ENCODE measurements at regions of chr10 and their contacts with region 1.

Region 1: DNA sequence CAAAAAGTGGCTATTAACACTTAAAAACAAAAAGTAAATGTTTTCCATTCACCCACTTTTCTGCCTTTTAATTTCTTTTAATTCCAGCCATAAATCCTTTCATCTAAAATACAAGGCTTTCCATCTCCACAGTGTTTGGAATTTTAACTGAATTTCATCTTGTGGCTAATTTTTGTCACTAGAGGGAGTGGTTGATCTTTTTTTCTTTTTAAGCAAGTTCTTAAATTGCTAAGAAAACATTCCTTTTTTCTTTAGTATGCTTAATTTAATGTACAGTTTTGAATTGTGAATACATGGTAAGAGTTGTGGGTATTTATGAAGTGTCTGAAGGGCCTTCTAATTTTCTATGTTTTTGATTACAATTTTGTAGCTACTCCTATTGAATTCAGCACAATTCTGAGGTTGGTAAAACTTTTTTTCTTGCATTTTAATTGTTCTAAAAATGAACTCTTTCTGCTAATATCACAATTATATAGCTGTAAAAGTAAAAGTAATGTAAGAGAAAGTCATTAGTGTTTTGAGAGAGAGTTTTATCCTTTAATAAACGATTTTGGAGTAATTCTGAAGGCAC is 54.9 kb upstream of the ANK3 start:
- DNase-seq: no peak
- ATAC-seq: no peak
- H3K4me3 ChIP-seq: no peak overlapping the region
- H3K4me3 Mint-ChIP-seq: no peak overlapping the region
- H3K27ac ChIP-seq: no peak overlapping the region
- H3K27ac Mint-ChIP-seq: no peak overlapping the region
- H3K4me1 ChIP-seq: no peaks in the 10 kb centered on the region
- H3K4me1 Mint-ChIP-seq: peaks cover 8% of the 10 kb centered on the region
- H3K27me3 ChIP-seq: no peaks in the 10 kb centered on the region
- H3K27me3 Mint-ChIP-seq: no peaks in the 10 kb centered on the region
- CTCF ChIP-seq: no peak

Region 2: DNA sequence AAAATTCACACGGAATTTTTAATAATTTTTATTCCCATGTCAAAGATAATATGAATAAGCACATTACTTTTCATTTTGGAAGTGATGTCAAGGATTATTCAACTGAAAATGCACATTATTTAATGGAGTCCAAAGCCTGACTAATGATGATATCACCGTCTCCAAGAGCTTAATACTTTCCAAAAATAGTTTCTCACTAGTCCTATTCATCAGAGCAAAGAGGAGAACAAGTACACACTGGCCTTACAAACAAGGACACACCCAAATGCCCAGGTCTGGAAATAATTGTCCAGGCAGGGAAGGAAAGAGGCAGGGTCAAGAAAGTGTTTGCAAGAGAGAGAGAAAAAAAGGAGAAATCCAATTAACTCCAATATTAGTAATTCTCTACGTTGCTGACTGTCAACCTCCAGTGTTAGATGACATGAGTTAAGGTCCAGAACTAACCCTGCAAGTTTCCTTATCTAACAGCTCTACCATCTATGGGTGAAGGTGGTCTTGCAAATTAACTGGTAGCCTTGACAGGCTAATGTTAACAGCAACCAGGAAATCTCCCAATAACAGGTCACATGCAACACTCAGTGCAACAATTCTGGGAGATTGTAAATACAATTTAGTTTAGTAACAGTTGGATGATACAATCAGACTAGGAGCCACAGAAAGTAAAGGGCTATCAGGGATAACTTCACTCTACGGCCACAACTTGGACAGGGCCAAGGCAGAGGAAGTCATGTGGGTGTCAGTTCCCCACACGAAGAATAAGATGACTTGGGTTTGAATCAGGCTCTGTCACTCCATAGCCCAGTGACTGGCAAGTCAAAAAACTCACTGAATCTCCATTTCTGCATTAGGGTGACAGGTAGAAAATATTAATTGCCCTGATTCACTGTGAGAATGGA is 321.2 kb before region 1 on chr10:
- CTCF ChIA-PET with region 1: no interaction called
- POLR2A ChIA-PET with region 1: no interaction called
- intact Hi-C with region 1: no loop called
- DNase-seq: no peak
- ATAC-seq: no peak
- H3K4me3 ChIP-seq: no peak overlapping the region
- H3K4me3 Mint-ChIP-seq: no peak overlapping the region
- H3K27ac ChIP-seq: no peak overlapping the region
- H3K27ac Mint-ChIP-seq: no peak overlapping the region
- H3K4me1 ChIP-seq: no peaks in the 10 kb centered on the region
- H3K4me1 Mint-ChIP-seq: no peaks in the 10 kb centered on the region
- H3K27me3 ChIP-seq: no peaks in the 10 kb centered on the region
- H3K27me3 Mint-ChIP-seq: no peaks in the 10 kb centered on the region
- CTCF ChIP-seq: no peak

Region 3: GRCh38 chr10:60495338-60496055 is 50.9 kb after region 1 on chr10:
- CTCF ChIA-PET with region 1: no interaction called
- POLR2A ChIA-PET with region 1: no interaction called
- intact Hi-C with region 1: no loop called
- DNase-seq: no peak
- ATAC-seq: no peak
- H3K4me3 ChIP-seq: no peak overlapping the region
- H3K4me3 Mint-ChIP-seq: no peak overlapping the region
- H3K27ac ChIP-seq: no peak overlapping the region
- H3K27ac Mint-ChIP-seq: no peak overlapping the region
- H3K4me1 ChIP-seq: no peaks in the 10 kb centered on the region
- H3K4me1 Mint-ChIP-seq: no peaks in the 10 kb centered on the region
- H3K27me3 ChIP-seq: no peaks in the 10 kb centered on the region
- H3K27me3 Mint-ChIP-seq: no peaks in the 10 kb centered on the region
- CTCF ChIP-seq: no peak

Region 4: GRCh38 chr10:60652628-60653027 is 208.0 kb after region 1 on chr10:
- CTCF ChIA-PET with region 1: no interaction called
- POLR2A ChIA-PET with region 1: no interaction called
- intact Hi-C with region 1: loop called in 1 of 2 experiments (anchors 10 kb)
- DNase-seq: no peak
- ATAC-seq: no peak
- H3K4me3 ChIP-seq: no peak overlapping the region
- H3K4me3 Mint-ChIP-seq: no peak overlapping the region
- H3K27ac ChIP-seq: no peak overlapping the region
- H3K27ac Mint-ChIP-seq: no peak overlapping the region
- H3K4me1 ChIP-seq: no peaks in the 10 kb centered on the region
- H3K4me1 Mint-ChIP-seq: no peaks in the 10 kb centered on the region
- H3K27me3 ChIP-seq: no peaks in the 10 kb centered on the region
- H3K27me3 Mint-ChIP-seq: peaks cover 2% of the 10 kb centered on the region
- CTCF ChIP-seq: no peak

Region 5: GRCh38 chr10:60760749-60761148 is 316.2 kb after region 1 on chr10:
- CTCF ChIA-PET with region 1: no interaction called
- POLR2A ChIA-PET with region 1: no interaction called
- intact Hi-C with region 1: loop called (anchors 5 to 10 kb)
- DNase-seq: no peak
- ATAC-seq: no peak
- H3K4me3 ChIP-seq: no peak overlapping the region
- H3K4me3 Mint-ChIP-seq: no peak overlapping the region
- H3K27ac ChIP-seq: no peak overlapping the region
- H3K27ac Mint-ChIP-seq: no peak overlapping the region
- H3K4me1 ChIP-seq: no peaks in the 10 kb centered on the region
- H3K4me1 Mint-ChIP-seq: no peaks in the 10 kb centered on the region
- H3K27me3 ChIP-seq: peaks cover 0 to 2% of the 10 kb centered on the region in 2 experiments
- H3K27me3 Mint-ChIP-seq: peaks cover 16% of the 10 kb centered on the region
- CTCF ChIP-seq: no peak

Region 6: DNA sequence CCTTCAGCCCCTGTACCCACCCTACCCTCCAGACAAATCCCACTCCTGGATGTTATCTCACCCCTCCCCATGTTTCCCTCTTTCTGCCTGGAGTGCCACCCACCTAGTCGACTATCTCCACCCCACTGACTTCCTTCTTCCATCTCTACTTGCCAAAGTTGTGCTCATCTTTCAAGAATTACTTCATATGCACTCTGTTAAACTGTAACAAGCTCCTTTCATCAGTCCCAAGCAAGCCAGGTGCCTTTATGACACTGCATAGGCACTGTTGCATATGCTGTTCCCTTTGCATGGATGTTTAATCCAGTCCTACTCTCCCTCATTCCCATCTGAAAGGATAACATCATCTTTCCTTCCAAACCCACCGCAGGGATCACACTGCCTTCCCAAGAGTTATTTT is 324.8 kb after region 1 on chr10:
- CTCF ChIA-PET with region 1: no interaction called
- POLR2A ChIA-PET with region 1: no interaction called
- intact Hi-C with region 1: loop called (anchors 5 to 10 kb)
- DNase-seq: no peak
- ATAC-seq: no peak
- H3K4me3 ChIP-seq: no peak overlapping the region
- H3K4me3 Mint-ChIP-seq: no peak overlapping the region
- H3K27ac ChIP-seq: no peak overlapping the region
- H3K27ac Mint-ChIP-seq: no peak overlapping the region
- H3K4me1 ChIP-seq: no peaks in the 10 kb centered on the region
- H3K4me1 Mint-ChIP-seq: no peaks in the 10 kb centered on the region
- H3K27me3 ChIP-seq: no peaks in the 10 kb centered on the region
- H3K27me3 Mint-ChIP-seq: no peaks in the 10 kb centered on the region
- CTCF ChIP-seq: no peak

Measured in CD8-positive, alpha-beta T cell (primary cell).